ENCODE measurements at regions of chr1 and their contacts with region 1.

Region 1: GRCh38 chr1:235105051-235106043 is 23.3 kb downstream of the TOMM20 start:
- DNase-seq: peak; percentile 26
- H3K4me3 Mint-ChIP-seq: peak overlapping the region; percentile 81
- H3K27ac Mint-ChIP-seq: peak overlapping the region; percentile 85
- H3K4me1 Mint-ChIP-seq: peaks cover 48% of the 10 kb centered on the region
- H3K27me3 Mint-ChIP-seq: no peaks in the 10 kb centered on the region

Region 2: GRCh38 chr1:234486498-234487448 is 618.6 kb before region 1 on chr1:
- intact Hi-C with region 1: loop called (anchors 1 kb)
- DNase-seq: peak; percentile 31
- H3K4me3 Mint-ChIP-seq: peak overlapping the region; percentile 34
- H3K27ac Mint-ChIP-seq: peak overlapping the region; percentile 97
- H3K4me1 Mint-ChIP-seq: peaks cover 49% of the 10 kb centered on the region
- H3K27me3 Mint-ChIP-seq: peaks cover 16% of the 10 kb centered on the region

Region 3: DNA sequence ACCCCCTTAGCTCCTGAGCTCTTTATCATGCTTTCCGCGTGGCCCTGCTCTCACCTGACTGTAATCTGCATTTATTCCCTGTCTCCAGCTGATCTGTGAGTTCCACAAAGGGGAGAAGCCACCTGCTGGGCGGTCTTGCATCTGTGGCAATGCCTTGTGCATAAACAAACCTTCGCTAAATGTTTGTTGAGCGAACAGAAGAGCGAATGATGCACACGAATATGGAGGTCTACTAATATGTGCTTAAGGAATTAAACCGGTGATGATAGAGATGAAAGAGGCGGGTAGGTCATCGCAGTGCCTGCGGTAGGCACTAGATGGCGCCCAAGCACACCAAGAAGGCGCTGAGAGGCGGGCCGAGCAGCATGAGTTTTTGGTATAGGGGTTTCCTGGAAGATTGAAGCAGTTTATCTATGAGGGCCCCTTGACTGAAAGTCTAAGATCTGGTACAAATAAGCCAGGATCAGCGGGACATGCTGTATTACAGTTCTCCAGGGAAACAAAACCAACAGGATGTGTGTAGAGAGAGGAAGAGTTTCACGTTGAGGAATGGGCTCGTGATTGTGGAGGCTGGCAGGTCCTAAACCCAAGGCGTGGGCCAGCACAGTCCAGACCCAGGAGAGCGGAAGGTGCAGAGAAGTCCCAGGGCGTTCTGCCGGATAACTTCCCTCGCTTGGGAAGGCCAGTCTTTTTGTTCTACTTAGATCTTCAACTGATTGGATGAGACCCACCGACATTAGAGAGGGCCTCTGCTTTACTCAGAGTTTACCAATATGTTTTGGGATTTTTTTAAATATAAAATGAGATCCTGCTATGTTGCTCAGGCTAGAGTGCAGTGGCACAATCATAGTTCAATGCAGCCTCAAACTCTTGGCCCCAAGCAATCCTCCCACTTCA is 11.4 kb before region 1 on chr1:
- intact Hi-C with region 1: loop called (anchors 1 kb)
- DNase-seq: peak; percentile 69
- H3K4me3 Mint-ChIP-seq: no peak overlapping the region
- H3K27ac Mint-ChIP-seq: peak overlapping the region; percentile 31
- H3K4me1 Mint-ChIP-seq: peaks cover 13% of the 10 kb centered on the region
- H3K27me3 Mint-ChIP-seq: no peaks in the 10 kb centered on the region

Region 4: DNA sequence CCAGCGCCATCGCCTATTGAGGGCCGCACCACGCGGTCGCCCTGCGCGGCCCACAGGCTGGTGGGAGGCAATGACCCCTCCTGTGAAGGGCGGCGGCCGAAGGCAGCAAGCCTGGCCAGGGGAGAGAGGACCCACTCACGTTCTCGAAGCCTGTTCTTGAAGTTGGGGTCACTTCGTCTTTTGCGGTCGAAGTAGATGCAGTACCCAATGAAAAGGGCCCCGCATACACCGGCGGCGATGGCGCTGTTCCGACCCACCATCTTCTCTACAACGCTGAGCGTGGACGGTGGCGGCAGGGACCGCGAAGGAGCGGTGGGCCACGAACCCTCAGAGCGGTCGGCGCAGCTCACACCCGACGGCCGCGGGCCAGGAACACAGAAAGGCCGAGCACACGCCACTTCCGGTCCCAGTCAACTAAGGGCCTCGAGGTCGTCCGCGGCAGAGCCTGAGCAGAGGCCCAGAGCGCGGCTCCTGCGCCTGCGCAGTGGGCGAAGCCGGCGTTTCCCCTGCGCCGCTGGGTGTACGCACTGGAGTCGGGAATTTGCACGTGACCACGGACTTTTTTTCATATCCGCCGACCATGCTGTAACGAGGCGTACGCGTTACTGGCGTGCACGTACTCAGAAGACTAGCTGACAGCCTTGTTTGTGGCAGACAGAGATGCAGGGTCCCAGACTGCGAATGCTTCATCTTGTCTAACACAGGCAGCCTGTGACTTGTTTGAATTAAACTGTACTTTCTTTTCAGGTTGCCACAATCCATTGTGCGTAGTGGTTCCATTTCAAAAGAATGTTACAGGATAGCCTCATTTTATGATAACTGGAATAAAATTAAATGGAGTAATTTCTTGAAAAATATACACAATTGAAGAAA is 23.3 kb after region 1 on chr1 and contains the start of gene TOMM20:
- intact Hi-C with region 1: loop called (anchors 1 kb)
- DNase-seq: peak; percentile 94
- H3K4me3 Mint-ChIP-seq: peak within 1 kb of the TSS; percentile 99
- H3K27ac Mint-ChIP-seq: peak within 1 kb of the TSS; percentile 94
- H3K4me1 Mint-ChIP-seq: peaks cover 45% of the 10 kb centered on the region
- H3K27me3 Mint-ChIP-seq: no peaks in the 10 kb centered on the region
- total RNA-seq, gene TOMM20: 112 and 137 TPM in 2 replicates

Region 5: GRCh38 chr1:235342039-235342438 is 236.7 kb after region 1 on chr1:
- intact Hi-C with region 1: no loop called
- DNase-seq: no peak
- H3K4me3 Mint-ChIP-seq: no peak overlapping the region
- H3K27ac Mint-ChIP-seq: no peak overlapping the region
- H3K4me1 Mint-ChIP-seq: peaks cover 3% of the 10 kb centered on the region
- H3K27me3 Mint-ChIP-seq: no peaks in the 10 kb centered on the region

Measured in activated T-helper 1 cell treated with anti-CD3 and anti-CD28 coated beads, Interleukin-12 subunit alpha, Interleukin-12 subunit beta, Interleukin-2, Interleukin-4 antibody, amounts not matched to agents 30 ng/mL and 10 ng/mL and 1 ng/mL, durations not matched to agents 14 hours and 24 hours and 36 hours (primary cell).